ENCODE measurements at regions of chr5 and their contacts with region 1.

Region 1: GRCh38 chr5:57032151-57032551 is 80.2 kb upstream of the MIER3 start:
- DNase-seq: no peak
- H3K4me3 ChIP-seq: no peak overlapping the region
- CTCF ChIP-seq: no peak
- POLR2A ChIP-seq: no peak

Region 2: DNA sequence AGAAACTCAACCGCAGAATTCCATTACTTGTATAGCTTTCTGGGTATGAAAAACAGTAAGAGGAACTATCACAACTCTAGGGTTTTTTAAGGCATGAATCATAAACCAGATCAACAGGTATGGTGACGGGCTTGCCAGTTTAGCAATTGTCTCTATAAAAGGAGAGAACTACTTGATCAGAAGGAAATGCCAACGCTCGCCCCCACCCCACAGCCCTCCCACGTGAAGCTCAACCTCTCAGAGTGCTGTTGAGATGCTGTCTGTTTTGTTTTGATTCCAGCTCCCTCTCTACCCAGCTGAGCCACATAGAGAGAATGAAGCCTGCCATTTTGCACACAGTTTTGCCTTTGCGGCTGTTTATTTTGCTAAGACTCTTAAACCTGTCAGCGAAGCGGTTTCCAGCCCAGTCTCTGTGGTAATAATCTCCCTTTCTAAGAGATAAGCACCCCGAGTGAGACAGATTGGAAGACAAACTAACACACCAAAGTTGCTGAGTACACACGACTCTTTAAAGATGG is 541.1 kb before region 1 on chr5:
- intact Hi-C with region 1: no loop called
- DNase-seq: peak in 1 of 2 donors; percentile 75
- H3K4me3 ChIP-seq: no peak overlapping the region
- CTCF ChIP-seq: no peak
- POLR2A ChIP-seq: no peak

Region 3: GRCh38 chr5:56993241-56993640 is 38.9 kb before region 1 on chr5:
- intact Hi-C with region 1: loop called (anchors 1 kb)
- DNase-seq: no peak
- H3K4me3 ChIP-seq: no peak overlapping the region
- CTCF ChIP-seq: no peak
- POLR2A ChIP-seq: no peak